ENCODE measurements at regions of chr11 and their contacts with region 1.

Region 1: DNA sequence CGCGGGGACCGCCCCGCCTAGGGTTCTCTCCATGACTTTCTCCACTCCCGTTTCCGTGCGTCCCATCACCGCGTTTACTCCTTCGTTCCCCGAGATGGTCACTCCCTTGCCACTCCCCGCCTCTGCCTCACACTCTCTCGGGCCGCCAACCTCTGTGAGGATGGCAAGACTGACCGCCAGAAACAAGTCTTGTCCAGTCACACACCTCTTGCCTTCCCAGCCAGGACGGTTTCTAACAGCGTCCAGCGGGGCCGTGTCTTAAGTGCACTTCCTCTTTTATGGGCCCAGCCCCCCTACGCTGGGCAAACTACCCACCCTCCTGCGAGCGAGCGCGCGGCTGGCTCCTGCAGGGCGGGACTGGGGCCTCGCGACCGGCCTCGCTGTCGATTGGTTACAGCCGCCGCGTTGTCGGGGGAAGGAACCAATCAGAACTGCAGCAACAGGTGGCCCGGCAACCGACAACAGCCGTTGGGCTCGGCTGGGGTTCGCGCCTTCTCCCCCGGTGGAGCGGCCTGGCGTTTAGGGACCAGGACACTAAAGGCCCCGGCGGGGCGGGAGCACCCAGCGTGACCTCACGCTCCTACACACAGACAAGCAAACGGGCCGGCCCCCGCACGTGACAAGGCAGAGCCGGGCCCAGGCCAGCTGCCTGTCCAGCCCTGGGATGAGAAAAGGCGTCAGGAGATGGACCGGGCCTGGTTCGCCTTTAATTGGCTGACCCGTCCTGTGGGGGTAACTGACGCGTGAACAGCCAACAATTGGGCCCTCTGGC is 512 bp upstream of the UCP2 start:
- DNase-seq: peak; percentile 88 to 96 (median 91)
- H3K4me3 ChIP-seq: peak overlapping the region; percentile 97
- H3K4me3 Mint-ChIP-seq: peak overlapping the region; percentile 98 to 100 (median 99)
- H3K27ac ChIP-seq: peak overlapping the region; percentile 95
- H3K27ac Mint-ChIP-seq: peak overlapping the region; percentile 94 to 100 (median 100)
- H3K4me1 ChIP-seq: peaks cover 39% of the 10 kb centered on the region
- H3K4me1 Mint-ChIP-seq: peaks cover 38 to 50% (median 41%) of the 10 kb centered on the region in 3 donors
- H3K27me3 ChIP-seq: no peaks in the 10 kb centered on the region
- H3K27me3 Mint-ChIP-seq: peaks cover 0 to 4% of the 10 kb centered on the region in 2 donors

Region 2: DNA sequence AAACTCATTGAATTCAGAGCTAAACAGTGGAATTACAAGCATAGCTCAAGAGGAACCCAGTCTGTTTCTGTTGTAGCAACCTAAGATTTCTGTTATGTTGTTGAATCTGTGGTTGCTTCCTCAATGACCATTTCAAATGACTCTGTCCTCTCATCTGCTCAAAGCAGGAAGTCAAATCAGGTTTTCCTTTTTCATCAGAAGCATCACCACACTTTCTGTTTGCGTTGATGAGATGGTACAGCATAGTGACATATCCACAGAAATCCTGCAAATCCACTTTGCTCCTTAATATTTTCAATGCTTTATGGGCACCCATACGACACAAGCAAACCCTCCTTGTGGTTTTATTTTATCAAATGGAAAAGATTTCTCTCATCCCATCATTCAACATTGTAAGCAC is 12.1 kb after region 1 on chr11:
- CTCF ChIA-PET with region 1: interaction called, 15 read pairs
- POLR2A ChIA-PET with region 1: interaction called, 52 read pairs
- DNase-seq: peak in 3 of 5 donors; percentile 49 to 89 (median 82)
- H3K4me3 ChIP-seq: peak overlapping the region; percentile 49
- H3K4me3 Mint-ChIP-seq: peak overlapping the region; percentile 55 to 86 (median 74)
- H3K27ac ChIP-seq: peak overlapping the region; percentile 93
- H3K27ac Mint-ChIP-seq: peak overlapping the region; percentile 93 to 99 (median 98)
- H3K4me1 ChIP-seq: peaks cover 60% of the 10 kb centered on the region
- H3K4me1 Mint-ChIP-seq: peaks cover 41 to 79% (median 71%) of the 10 kb centered on the region in 3 donors
- H3K27me3 ChIP-seq: no peaks in the 10 kb centered on the region
- H3K27me3 Mint-ChIP-seq: no peaks in the 10 kb centered on the region

Region 3: GRCh38 chr11:74004759-74005615 is 21.8 kb after region 1 on chr11:
- CTCF ChIA-PET with region 1: interaction called, 29 read pairs
- POLR2A ChIA-PET with region 1: interaction called, 23 read pairs
- DNase-seq: peak; percentile 75 to 93 (median 87)
- H3K4me3 ChIP-seq: peak overlapping the region; percentile 39
- H3K4me3 Mint-ChIP-seq: peak overlapping the region; percentile 53 to 88 (median 75)
- H3K27ac ChIP-seq: peak overlapping the region; percentile 52
- H3K27ac Mint-ChIP-seq: peak overlapping the region; percentile 83 to 99 (median 92)
- H3K4me1 ChIP-seq: peaks cover 68% of the 10 kb centered on the region
- H3K4me1 Mint-ChIP-seq: peaks cover 64 to 81% (median 73%) of the 10 kb centered on the region in 3 donors
- H3K27me3 ChIP-seq: no peaks in the 10 kb centered on the region
- H3K27me3 Mint-ChIP-seq: peaks cover 0 to under 1% of the 10 kb centered on the region in 2 donors

Measured in CD8-positive, alpha-beta memory T cell (primary cell).